ENCODE measurements at regions of chr9 and their contacts with region 1.

Region 1: GRCh38 chr9:38160613-38161215 is 91.7 kb upstream of the SHB start:
- DNase-seq: no peak
- ATAC-seq: peak; percentile 89
- H3K4me3 ChIP-seq: no peak overlapping the region
- H3K27ac ChIP-seq: no peak overlapping the region
- H3K4me1 ChIP-seq: no peaks in the 10 kb centered on the region; the same call in 1 of the 2 replicates
- H3K27me3 ChIP-seq: no peaks in the 10 kb centered on the region
- CTCF ChIP-seq: peak; percentile 62 to 90 (median 86)
- EP300 ChIP-seq: no peak
- POLR2A ChIP-seq: no peak
- RAD21 ChIP-seq: peak; percentile 75

Region 2: DNA sequence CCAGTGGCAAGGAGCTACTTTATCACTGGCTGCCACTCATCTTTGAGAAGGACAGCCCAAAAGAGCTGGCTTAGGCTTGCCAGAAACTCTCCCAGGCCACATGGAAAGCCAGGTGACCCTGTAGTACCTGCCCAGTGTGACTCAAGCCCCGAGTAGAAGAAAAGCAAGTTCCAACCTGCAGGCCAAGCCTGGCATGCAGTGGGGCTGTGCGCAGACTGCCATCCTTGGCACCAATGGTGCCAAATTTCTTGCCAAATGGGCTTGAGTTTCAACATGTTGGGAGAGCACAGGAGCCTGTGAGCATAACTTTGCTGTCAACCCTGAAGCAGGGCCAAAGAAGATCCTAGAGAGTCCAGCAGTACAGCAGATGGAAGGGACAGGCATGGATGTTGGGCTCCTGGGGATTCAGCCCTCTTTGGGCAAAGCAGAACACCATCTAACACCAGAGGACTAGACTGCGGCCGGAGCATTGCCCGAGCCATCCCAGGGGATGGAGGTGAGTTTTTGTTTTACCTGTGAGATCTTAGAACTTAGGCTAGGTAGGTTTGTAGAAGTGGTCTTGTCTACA is 64.4 kb before region 1 on chr9:
- CTCF ChIA-PET with region 1: interaction called, 243 read pairs
- POLR2A ChIA-PET with region 1: interaction called, 4 read pairs
- RAD21 ChIA-PET with region 1: interaction called, 162 read pairs
- SMC1A ChIA-PET with region 1: interaction called, 169 read pairs
- in situ Hi-C with region 1: no loop called
- intact Hi-C with region 1: no loop called
- DNase-seq: no peak
- ATAC-seq: no peak
- H3K4me3 ChIP-seq: no peak overlapping the region
- H3K27ac ChIP-seq: no peak overlapping the region
- H3K4me1 ChIP-seq: peaks cover 9% of the 10 kb centered on the region
- H3K27me3 ChIP-seq: no peaks in the 10 kb centered on the region
- CTCF ChIP-seq: no peak
- EP300 ChIP-seq: no peak
- POLR2A ChIP-seq: no peak
- RAD21 ChIP-seq: no peak

Region 3: DNA sequence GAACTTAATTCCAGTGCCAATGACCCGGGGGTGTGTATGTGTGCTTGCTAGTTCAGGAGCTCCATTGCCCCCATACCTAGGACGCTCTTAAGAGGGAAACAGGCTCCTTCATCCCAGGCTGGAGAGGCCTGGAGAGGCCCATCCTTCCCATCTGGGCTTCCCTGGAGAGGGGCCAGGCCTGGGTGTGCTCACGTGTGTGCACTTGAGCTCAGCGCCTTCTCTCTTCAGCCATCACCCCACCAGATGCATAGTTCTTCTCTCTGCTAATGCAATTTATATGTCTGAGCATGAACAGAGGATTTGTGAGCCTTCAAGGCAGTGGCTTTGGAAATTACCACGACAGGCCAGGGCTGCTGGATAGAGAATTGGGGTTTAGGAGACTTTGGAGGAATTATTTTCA is 43.1 kb before region 1 on chr9:
- CTCF ChIA-PET with region 1: interaction called, 13 read pairs
- POLR2A ChIA-PET with region 1: interaction called, 3 read pairs
- RAD21 ChIA-PET with region 1: interaction called, 5 read pairs
- SMC1A ChIA-PET with region 1: interaction called, 9 read pairs
- in situ Hi-C with region 1: no loop called
- intact Hi-C with region 1: no loop called
- DNase-seq: no peak
- ATAC-seq: no peak
- H3K4me3 ChIP-seq: no peak overlapping the region
- H3K27ac ChIP-seq: no peak overlapping the region
- H3K4me1 ChIP-seq: no peaks in the 10 kb centered on the region
- H3K27me3 ChIP-seq: no peaks in the 10 kb centered on the region; a peak in 1 of 4 replicates
- CTCF ChIP-seq: no peak
- EP300 ChIP-seq: no peak
- POLR2A ChIP-seq: no peak
- RAD21 ChIP-seq: no peak

Region 4: DNA sequence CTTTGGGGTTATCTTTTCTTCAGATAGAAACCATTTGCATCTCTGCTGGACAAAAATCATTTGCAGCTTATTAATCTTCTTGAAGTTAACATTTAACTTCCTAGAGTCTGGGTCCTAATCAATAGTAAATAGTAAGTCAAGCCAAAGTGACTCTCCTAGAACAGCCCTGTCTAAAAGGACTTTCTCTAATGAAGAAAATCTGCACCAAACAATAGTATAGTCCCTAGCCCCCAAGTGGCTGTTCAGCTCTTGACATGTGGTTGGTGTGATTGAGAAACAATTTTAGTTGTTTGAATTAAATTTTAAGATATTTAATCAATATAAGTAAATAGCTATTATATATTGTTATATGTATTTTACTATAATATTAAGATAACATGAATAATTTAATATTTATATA is 27.1 kb before region 1 on chr9:
- CTCF ChIA-PET with region 1: interaction called, 29 read pairs
- POLR2A ChIA-PET with region 1: interaction called, 8 read pairs
- RAD21 ChIA-PET with region 1: interaction called, 10 read pairs
- SMC1A ChIA-PET with region 1: interaction called, 51 read pairs
- in situ Hi-C with region 1: no loop called
- intact Hi-C with region 1: no loop called
- DNase-seq: no peak
- ATAC-seq: no peak
- H3K4me3 ChIP-seq: no peak overlapping the region
- H3K27ac ChIP-seq: no peak overlapping the region
- H3K4me1 ChIP-seq: peaks cover 3% of the 10 kb centered on the region; the same call in 1 of the 2 replicates
- H3K27me3 ChIP-seq: peaks cover 0 to 2% of the 10 kb centered on the region in 2 experiments; a peak in 3 of 4 replicates
- CTCF ChIP-seq: no peak
- EP300 ChIP-seq: no peak
- POLR2A ChIP-seq: no peak
- RAD21 ChIP-seq: peak; percentile 29; the same call in 1 of the 2 replicates

Region 5: DNA sequence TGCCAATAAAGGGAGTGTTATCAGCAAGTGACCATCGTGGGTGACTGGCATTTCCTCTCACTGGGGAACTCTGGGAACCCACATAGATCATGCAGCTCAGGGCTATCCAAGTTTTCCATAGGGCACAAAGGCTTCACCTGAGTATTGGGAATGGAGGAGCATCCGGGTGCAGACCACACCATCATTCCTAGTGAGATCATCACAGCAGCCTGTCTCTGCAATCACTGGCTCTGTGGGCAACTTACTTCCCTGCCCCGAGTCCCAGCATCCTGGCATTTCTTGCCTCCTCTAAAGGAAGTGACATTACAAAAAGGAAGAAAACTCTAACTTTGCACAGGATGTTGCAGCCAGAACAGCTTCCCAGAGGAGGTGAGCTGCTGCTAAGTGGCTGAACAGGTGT is 11.1 kb before region 1 on chr9:
- CTCF ChIA-PET with region 1: interaction called, 43 read pairs
- POLR2A ChIA-PET with region 1: interaction called, 3 read pairs
- RAD21 ChIA-PET with region 1: interaction called, 12 read pairs
- SMC1A ChIA-PET with region 1: interaction called, 6 read pairs
- in situ Hi-C with region 1: no loop called
- intact Hi-C with region 1: no loop called
- DNase-seq: no peak
- ATAC-seq: no peak
- H3K4me3 ChIP-seq: no peak overlapping the region
- H3K27ac ChIP-seq: no peak overlapping the region
- H3K4me1 ChIP-seq: no peaks in the 10 kb centered on the region
- H3K27me3 ChIP-seq: no peaks in the 10 kb centered on the region; a peak in 1 of 4 replicates
- CTCF ChIP-seq: no peak
- EP300 ChIP-seq: no peak
- POLR2A ChIP-seq: no peak
- RAD21 ChIP-seq: no peak

Region 6: DNA sequence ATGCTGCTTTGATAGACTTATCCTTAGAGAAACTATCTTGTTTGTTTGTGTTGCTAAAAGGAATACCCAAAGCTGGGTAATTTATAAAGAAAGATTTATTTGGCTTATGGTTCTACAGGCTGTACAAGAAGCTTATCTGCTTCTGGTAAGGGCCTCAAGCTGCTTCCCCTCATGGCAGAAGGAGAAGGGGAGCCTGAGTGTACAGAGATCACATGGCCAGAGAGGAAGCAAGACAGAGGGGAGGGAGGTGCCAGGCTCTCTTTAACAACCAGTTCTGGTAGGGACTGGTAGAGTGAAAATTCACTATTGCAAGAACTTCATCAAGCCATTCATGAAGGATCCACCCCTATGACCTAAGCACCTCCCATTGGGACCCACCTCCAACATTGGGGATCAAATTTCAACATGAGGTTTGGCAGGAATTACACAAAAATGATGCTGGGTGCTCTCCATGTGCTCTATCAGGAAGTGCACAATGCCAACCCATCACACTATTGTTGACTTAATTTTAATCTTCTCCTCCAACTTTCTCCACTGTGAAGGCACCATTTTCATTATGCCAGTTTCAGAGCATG is 23.4 kb after region 1 on chr9:
- CTCF ChIA-PET with region 1: interaction called, 13 read pairs
- POLR2A ChIA-PET with region 1: interaction called, 7 read pairs
- RAD21 ChIA-PET with region 1: interaction called, 30 read pairs
- SMC1A ChIA-PET with region 1: interaction called, 23 read pairs
- in situ Hi-C with region 1: no loop called
- intact Hi-C with region 1: no loop called
- DNase-seq: no peak
- ATAC-seq: no peak
- H3K4me3 ChIP-seq: no peak overlapping the region
- H3K27ac ChIP-seq: no peak overlapping the region
- H3K4me1 ChIP-seq: peaks cover 14% of the 10 kb centered on the region
- H3K27me3 ChIP-seq: peaks cover 0 to 2% of the 10 kb centered on the region in 2 experiments; a peak in 1 of 4 replicates
- CTCF ChIP-seq: no peak
- EP300 ChIP-seq: no peak
- POLR2A ChIP-seq: no peak
- RAD21 ChIP-seq: no peak